K562 (cell line): ENCODE measurements at regions of chr7 and their contacts with region 1.

Region 1: DNA sequence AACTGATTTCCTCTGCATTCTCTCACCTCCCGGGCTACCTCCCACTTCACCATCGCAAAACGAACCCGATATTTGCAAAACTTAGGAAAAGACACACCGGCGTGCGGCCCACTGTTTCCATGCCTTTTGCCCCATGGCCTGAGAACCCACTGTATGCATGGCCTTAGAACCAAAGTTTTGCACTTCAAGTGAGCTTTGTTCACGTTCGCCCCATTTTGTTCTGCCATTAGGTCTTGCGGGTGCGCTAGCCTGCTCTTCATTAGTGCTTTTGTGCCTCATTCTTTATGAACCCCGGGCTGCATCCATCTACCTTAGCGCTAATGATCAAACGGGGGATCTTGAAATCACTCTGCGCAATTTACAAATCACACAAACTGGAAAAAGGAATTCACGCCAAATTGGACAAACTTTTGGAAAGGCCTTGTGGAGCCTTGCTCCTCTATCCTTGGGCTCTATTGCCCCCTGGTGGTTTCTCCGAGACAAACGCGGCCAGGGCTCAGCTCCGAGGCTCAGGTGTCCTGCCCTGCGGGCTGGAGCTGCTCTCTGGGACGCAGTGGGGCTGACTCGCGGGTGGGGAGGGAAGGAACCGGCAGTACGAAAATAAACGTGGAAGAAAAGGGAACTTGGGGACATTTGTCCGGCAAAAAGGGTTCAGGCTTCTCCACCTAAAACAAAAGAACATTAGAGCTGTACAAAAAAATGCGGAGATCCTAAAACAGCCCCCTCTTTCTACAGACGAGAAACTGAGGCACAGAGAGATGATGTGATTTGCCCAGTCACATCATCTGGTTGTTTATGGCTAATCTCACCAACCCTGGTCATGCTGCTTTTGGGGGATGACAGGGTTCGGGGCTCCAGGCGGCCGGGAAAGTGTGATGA is 300.4 kb upstream of the NFE2L3 start:
- DNase-seq: peak; percentile 62 to 89 (median 65)
- ATAC-seq: peak; percentile 63
- H3K4me3 ChIP-seq: no peak overlapping the region
- H3K27ac ChIP-seq: no peak overlapping the region
- H3K4me1 ChIP-seq: peaks cover 11 to 17% of the 10 kb centered on the region in 2 experiments
- H3K27me3 ChIP-seq: no peaks in the 10 kb centered on the region
- CTCF ChIP-seq: peak; percentile 85 to 91 (median 89)
- EP300 ChIP-seq: no peak
- POLR2A ChIP-seq: no peak
- RAD21 ChIP-seq: peak; percentile 95 to 96

Region 2: GRCh38 chr7:25259587-25260243 is 591.9 kb before region 1 on chr7:
- CTCF ChIA-PET with region 1: interaction called, 7 read pairs
- POLR2A ChIA-PET with region 1: interaction called, 3 read pairs
- in situ Hi-C with region 1: loop called (anchors 5 kb)
- intact Hi-C with region 1: loop called (anchors 1 kb)
- DNase-seq: peak; percentile 49 to 77 (median 56)
- ATAC-seq: peak; percentile 97
- H3K4me3 ChIP-seq: no peak overlapping the region
- H3K27ac ChIP-seq: no peak overlapping the region
- H3K4me1 ChIP-seq: no peaks in the 10 kb centered on the region; a peak in 1 of 5 replicates
- H3K27me3 ChIP-seq: peaks cover 0 to 8% of the 10 kb centered on the region in 2 experiments; a peak in 3 of 5 replicates
- CTCF ChIP-seq: peak; percentile 81 to 90 (median 88)
- EP300 ChIP-seq: no peak
- POLR2A ChIP-seq: no peak
- RAD21 ChIP-seq: peak; percentile 92

Region 3: DNA sequence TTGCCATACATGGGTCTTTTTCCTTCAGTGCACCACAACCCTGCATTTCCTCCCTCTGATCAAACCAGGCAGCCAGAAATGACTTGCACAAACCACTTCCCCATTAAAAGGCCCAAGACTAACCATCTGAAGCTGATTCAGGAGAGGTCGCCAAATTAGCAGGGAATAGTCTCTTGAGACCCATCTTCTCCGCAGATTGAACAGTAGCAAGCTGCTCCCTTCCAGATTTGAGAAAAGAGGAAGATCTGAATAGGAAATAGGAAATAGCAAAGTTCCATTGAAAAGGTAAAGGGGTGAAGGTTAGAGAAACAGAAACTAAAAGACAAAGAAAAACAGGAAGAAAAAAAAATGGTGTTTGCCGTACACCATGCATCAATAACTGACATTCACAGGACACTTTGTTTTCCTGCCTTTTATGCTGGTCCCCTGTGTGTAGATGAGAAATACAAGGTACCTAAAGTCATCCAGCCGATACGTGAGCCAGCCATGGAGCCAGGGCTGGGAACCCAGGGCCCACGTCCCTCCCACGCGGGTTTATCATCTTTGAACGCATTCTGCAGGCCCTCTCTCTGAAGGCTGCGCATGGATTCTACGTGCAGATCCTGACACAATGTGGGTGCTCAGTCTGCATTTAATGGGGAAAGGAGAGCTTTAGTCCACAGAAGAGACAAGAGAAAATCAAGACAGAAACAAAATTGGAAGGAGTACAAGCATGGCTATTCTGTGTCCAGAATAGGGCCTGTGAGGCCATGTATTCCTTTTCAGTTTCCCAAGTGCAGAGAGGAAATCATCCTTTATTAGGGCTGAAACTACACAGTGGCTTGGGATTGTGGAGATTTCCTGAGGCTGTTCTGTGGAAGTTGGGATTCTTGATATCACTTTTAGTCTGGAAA is 354.8 kb before region 1 on chr7:
- CTCF ChIA-PET with region 1: no interaction called
- POLR2A ChIA-PET with region 1: no interaction called
- in situ Hi-C with region 1: no loop called
- intact Hi-C with region 1: loop called (anchors 10 kb)
- DNase-seq: peak in 2 of 4 experiments; percentile 20 to 50
- ATAC-seq: peak; percentile 67
- H3K4me3 ChIP-seq: no peak overlapping the region
- H3K27ac ChIP-seq: peak overlapping the region; percentile 40
- H3K4me1 ChIP-seq: peaks cover 16 to 31% of the 10 kb centered on the region in 2 experiments
- H3K27me3 ChIP-seq: no peaks in the 10 kb centered on the region; a peak in 1 of 5 replicates
- CTCF ChIP-seq: 0 out of 6 replicates have a peak, but pooled peaks of 1 of the 3 experiments have one; percentile 9
- EP300 ChIP-seq: no peak
- POLR2A ChIP-seq: no peak
- RAD21 ChIP-seq: no peak

Region 4: GRCh38 chr7:25565949-25566348 is 285.6 kb before region 1 on chr7:
- CTCF ChIA-PET with region 1: interaction called, 10 read pairs
- POLR2A ChIA-PET with region 1: no interaction called
- in situ Hi-C with region 1: loop called (anchors 5 kb)
- intact Hi-C with region 1: loop called (anchors 1 kb)
- DNase-seq: peak; percentile 46 to 72 (median 64)
- ATAC-seq: no peak
- H3K4me3 ChIP-seq: no peak overlapping the region
- H3K27ac ChIP-seq: no peak overlapping the region
- H3K4me1 ChIP-seq: peaks cover 0 to 4% of the 10 kb centered on the region in 2 experiments; a peak in 1 of 5 replicates
- H3K27me3 ChIP-seq: peaks cover 4 to 38% of the 10 kb centered on the region in 2 experiments; a peak in 4 of 5 replicates
- CTCF ChIP-seq: peak; percentile 98 to 100 (median 100)
- EP300 ChIP-seq: no peak
- POLR2A ChIP-seq: no peak
- RAD21 ChIP-seq: peak; percentile 99

Region 5: DNA sequence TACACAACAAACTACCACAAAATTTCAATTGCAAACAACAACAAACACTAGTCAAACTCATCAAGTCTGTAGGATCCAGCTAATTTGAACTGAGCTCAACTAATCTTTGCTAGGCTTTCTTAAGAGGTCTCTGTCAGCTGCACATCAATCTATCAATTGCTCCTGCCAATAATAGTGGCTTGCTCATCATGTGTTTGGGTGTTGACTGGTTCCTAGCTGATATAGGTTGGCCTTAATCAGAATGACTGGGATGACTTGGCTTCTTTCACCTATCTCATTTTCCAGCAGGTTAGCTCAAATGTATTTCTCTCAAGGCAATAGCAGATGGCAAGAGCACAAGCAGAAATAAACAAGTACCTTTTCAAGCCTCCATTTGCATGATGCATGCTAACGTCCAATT is 69.9 kb before region 1 on chr7:
- CTCF ChIA-PET with region 1: interaction called, 3 read pairs
- POLR2A ChIA-PET with region 1: no interaction called
- in situ Hi-C with region 1: no loop called
- intact Hi-C with region 1: loop called (anchors 2 kb)
- DNase-seq: no peak
- ATAC-seq: no peak
- H3K4me3 ChIP-seq: no peak overlapping the region
- H3K27ac ChIP-seq: no peak overlapping the region
- H3K4me1 ChIP-seq: no peaks in the 10 kb centered on the region
- H3K27me3 ChIP-seq: peaks cover 0 to 6% of the 10 kb centered on the region in 2 experiments; a peak in 3 of 5 replicates
- CTCF ChIP-seq: no peak
- EP300 ChIP-seq: no peak
- POLR2A ChIP-seq: no peak
- RAD21 ChIP-seq: no peak

Region 6: DNA sequence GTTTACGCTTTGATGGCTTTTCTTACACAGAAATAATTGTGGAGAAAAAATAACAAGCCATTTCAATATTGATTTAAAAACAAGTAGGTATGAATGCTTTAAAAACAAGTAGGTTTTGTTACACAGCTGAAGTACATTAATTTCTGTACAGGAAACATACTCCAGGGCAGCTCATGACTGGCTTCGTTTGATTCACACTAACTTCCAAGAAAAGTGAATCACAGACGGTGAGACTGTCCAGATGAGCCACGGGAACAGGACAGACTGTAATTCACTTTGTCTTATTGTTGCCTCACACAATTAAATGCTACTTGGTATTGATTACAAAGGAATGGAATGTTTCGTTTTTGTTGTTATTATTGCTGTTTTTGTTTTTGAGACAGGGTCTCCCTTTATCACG is 413.5 kb after region 1 on chr7:
- CTCF ChIA-PET with region 1: no interaction called
- POLR2A ChIA-PET with region 1: no interaction called
- in situ Hi-C with region 1: no loop called
- intact Hi-C with region 1: no loop called
- DNase-seq: no peak
- ATAC-seq: no peak
- H3K4me3 ChIP-seq: no peak overlapping the region
- H3K27ac ChIP-seq: no peak overlapping the region
- H3K4me1 ChIP-seq: no peaks in the 10 kb centered on the region
- H3K27me3 ChIP-seq: no peaks in the 10 kb centered on the region
- CTCF ChIP-seq: no peak
- EP300 ChIP-seq: no peak
- POLR2A ChIP-seq: no peak
- RAD21 ChIP-seq: no peak